ENCODE measurements at regions of chr6 and their contacts with region 1.

Region 1: DNA sequence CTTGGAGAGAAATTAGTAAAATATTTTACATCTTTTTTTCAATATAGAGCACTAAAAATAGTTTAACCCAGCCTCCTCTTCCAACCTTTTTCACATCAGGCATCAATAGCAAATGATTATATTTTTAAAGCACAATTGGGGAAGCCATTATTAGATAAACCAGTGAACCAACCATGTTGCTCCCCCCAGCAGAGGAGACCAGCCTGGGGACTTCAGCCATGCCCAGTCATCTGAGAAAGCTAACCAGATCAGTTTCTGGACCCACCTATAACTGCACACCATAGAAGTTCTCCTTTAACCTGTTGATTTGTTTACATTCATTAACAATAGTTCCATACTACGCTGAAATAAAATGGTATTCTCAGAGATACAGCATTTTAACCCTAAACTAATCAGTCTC is 13.8 kb upstream of the SDHAF4 start:
- DNase-seq: no peak

Region 2: GRCh38 chr6:70436320-70436719 is 116.7 kb before region 1 on chr6:
- intact Hi-C with region 1: no loop called
- DNase-seq: no peak

Region 3: GRCh38 chr6:70604254-70604653 is 51.3 kb after region 1 on chr6:
- intact Hi-C with region 1: loop called (anchors 2 kb)
- DNase-seq: no peak